K562 (cell line): ENCODE measurements at regions of chr7 and their contacts with region 1.

Region 1: DNA sequence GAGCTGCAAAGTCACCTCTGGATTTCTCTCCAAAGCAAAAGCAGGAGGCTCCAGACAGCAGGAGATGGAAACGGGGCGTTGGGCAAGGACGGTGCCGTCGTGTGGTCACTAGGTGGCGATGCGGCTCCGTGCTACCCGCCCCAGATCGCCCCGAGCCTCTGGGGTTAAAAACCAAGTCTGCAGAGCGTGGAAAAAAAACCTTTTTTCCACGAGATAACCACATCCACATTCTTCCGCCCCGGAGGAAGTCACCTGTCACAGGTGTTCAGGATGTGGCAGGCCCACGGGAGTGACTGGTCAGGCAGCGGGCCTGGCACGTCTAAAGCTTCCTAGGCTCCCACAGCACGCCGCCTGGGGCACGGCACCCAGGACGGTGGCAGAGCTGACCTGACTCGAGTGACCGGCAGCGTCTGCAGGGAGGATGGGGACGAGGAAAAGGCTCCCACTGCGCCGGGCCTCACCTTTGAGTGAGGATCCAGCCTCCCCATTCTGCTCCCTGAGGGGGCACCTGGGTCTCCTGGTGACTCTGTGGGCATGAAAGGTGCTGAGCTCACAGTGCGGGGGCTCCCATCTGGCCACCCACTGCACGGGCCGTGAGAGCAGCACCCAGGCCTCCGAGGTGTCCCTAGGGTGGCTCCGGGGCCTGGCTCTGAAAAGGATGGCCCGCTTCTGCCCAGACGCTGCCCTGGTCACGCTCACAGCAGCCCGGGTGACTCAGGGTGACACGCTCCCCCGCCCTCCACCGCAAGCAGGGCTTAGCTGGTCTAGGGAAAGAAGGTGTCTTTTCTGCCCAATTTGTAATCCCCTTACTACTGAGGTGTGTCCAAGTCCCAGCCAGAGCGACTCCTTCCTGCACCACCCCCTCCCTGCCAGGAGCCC is 71.3 kb upstream of the TNRC18 start:
- DNase-seq: peak; percentile 83 to 88 (median 86)
- ATAC-seq: peak; percentile 91
- H3K4me3 ChIP-seq: no peak overlapping the region
- H3K27ac ChIP-seq: no peak overlapping the region
- H3K4me1 ChIP-seq: peaks cover 12 to 60% of the 10 kb centered on the region in 2 experiments; a peak in 4 of 5 replicates
- H3K27me3 ChIP-seq: no peaks in the 10 kb centered on the region
- CTCF ChIP-seq: peak; percentile 95 to 97 (median 95)
- EP300 ChIP-seq: peak; percentile 10; the same call in 1 of the 2 replicates
- POLR2A ChIP-seq: no peak; the same call in 1 of the 2 replicates
- RAD21 ChIP-seq: peak; percentile 99

Region 2: GRCh38 chr7:5526100-5526905 is 31.4 kb after region 1 on chr7:
- CTCF ChIA-PET with region 1: no interaction called
- POLR2A ChIA-PET with region 1: interaction called, 42 read pairs
- in situ Hi-C with region 1: no loop called
- intact Hi-C with region 1: no loop called
- DNase-seq: peak in 1 of 4 experiments; percentile 29
- ATAC-seq: peak; percentile 41
- H3K4me3 ChIP-seq: no peak overlapping the region
- H3K27ac ChIP-seq: 0 out of 3 replicates have a peak overlapping the region, but pooled peaks have one; percentile 9
- H3K4me1 ChIP-seq: peaks cover 18 to 30% of the 10 kb centered on the region in 2 experiments
- H3K27me3 ChIP-seq: no peaks in the 10 kb centered on the region
- CTCF ChIP-seq: peak; percentile 25 to 45 (median 28); a peak in 2 of 6 replicates
- EP300 ChIP-seq: no peak; the same call in none of the 2 replicates
- POLR2A ChIP-seq: peak; percentile 97
- RAD21 ChIP-seq: peak; percentile 42 to 49

Region 3: GRCh38 chr7:5557920-5558401 is 63.0 kb after region 1 on chr7:
- CTCF ChIA-PET with region 1: interaction called, 19 read pairs
- POLR2A ChIA-PET with region 1: interaction called, 4 read pairs
- in situ Hi-C with region 1: no loop called
- intact Hi-C with region 1: loop called (anchors 1 kb)
- DNase-seq: peak in 3 of 4 experiments; percentile 9 to 48 (median 47)
- ATAC-seq: 0 out of 3 replicates have a peak, but pooled peaks have one; percentile 3
- H3K4me3 ChIP-seq: no peak overlapping the region
- H3K27ac ChIP-seq: peak overlapping the region; percentile 42; the same call in 2 of the 3 replicates
- H3K4me1 ChIP-seq: peaks cover 49 to 77% of the 10 kb centered on the region in 2 experiments
- H3K27me3 ChIP-seq: no peaks in the 10 kb centered on the region
- CTCF ChIP-seq: no peak
- EP300 ChIP-seq: no peak
- POLR2A ChIP-seq: no peak
- RAD21 ChIP-seq: no peak

Region 4: DNA sequence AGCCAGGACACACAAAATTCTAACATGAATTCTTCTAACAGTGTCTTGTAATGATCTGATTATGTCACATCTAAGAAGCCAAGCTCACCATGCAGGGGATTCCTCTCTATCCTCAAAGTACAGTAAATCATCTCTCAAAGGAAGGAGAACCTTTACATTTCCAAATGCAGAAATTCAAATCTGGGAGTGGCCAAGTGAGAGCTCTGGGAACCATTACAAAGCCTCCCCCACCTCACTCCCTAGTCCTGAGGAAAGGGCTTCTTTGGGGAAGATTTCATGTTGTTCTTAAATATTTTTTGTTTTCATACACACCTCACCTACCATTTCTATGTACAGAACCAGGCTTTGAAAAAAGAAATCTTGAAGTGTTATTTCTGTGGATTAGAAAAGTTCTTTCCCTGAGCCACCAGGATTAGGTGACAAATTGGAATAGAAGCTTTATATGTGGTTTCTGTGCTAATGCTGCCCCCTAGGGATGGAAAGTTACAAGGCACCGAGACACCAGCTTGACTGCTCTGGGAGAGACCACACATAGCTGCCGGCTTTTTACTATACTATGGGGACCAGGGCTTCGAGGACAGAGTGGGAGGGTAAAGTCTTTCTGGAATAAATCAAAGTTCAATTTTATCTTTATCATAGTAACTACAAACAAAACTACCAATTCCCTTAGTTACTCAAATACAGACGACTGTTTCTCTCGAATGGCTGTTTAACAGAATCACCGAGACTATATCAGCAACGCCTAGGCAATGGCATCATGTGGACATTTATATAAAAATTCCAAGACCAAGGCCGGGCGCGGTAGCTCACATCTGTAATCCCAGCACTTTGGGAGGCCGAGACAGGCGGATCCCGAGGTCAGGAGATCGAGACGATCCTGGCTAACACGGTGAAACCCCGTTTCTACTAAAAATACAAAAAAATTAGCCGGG is 170.4 kb after region 1 on chr7:
- CTCF ChIA-PET with region 1: interaction called, 6 read pairs
- POLR2A ChIA-PET with region 1: interaction called, 3 read pairs
- in situ Hi-C with region 1: loop called (anchors 5 kb)
- intact Hi-C with region 1: loop called (anchors 1 kb)
- DNase-seq: peak; percentile 71 to 88 (median 77)
- ATAC-seq: peak; percentile 96
- H3K4me3 ChIP-seq: no peak overlapping the region
- H3K27ac ChIP-seq: no peak overlapping the region
- H3K4me1 ChIP-seq: peaks cover 5 to 13% of the 10 kb centered on the region in 2 experiments; a peak in 4 of 5 replicates
- H3K27me3 ChIP-seq: no peaks in the 10 kb centered on the region
- CTCF ChIP-seq: peak; percentile 84 to 89 (median 85)
- EP300 ChIP-seq: 0 out of 2 replicates have a peak, but pooled peaks have one; percentile 10
- POLR2A ChIP-seq: no peak
- RAD21 ChIP-seq: peak; percentile 94 to 97

Region 5: GRCh38 chr7:5677538-5678294 is 182.8 kb after region 1 on chr7:
- CTCF ChIA-PET with region 1: interaction called, 21 read pairs
- POLR2A ChIA-PET with region 1: interaction called, 6 read pairs
- in situ Hi-C with region 1: no loop called
- intact Hi-C with region 1: no loop called
- DNase-seq: peak; percentile 57 to 67 (median 62)
- ATAC-seq: peak; percentile 86
- H3K4me3 ChIP-seq: no peak overlapping the region
- H3K27ac ChIP-seq: no peak overlapping the region
- H3K4me1 ChIP-seq: peaks cover 0 to 4% of the 10 kb centered on the region in 2 experiments; a peak in 2 of 5 replicates
- H3K27me3 ChIP-seq: no peaks in the 10 kb centered on the region
- CTCF ChIP-seq: peak; percentile 71 to 79 (median 77)
- EP300 ChIP-seq: no peak
- POLR2A ChIP-seq: no peak
- RAD21 ChIP-seq: peak; percentile 63 to 79

Region 6: DNA sequence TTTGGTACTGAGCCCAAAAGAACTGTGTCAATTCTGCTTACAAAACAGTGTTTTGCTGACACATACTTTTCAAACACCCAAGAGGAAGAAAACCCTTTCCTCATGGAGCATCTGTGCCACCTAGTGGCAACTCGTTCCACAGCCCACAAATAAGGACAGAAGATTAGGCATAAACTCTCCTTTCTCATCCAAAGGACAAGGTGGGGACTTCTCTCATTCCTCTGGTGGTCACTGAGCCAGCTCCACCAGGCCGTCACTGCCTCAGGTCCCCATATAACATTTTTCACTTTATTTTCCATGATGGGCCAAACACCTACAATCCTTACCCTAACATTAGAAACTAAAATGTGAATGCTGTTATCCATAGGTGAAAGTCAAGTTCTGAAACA is 209.6 kb after region 1 on chr7:
- CTCF ChIA-PET with region 1: interaction called, 8 read pairs
- POLR2A ChIA-PET with region 1: no interaction called
- in situ Hi-C with region 1: no loop called
- intact Hi-C with region 1: loop called (anchors 1 kb)
- DNase-seq: peak; percentile 62 to 85 (median 70)
- ATAC-seq: peak; percentile 96
- H3K4me3 ChIP-seq: no peak overlapping the region
- H3K27ac ChIP-seq: no peak overlapping the region; the same call in 2 of the 3 replicates
- H3K4me1 ChIP-seq: peaks cover 0 to 3% of the 10 kb centered on the region in 2 experiments; a peak in 3 of 5 replicates
- H3K27me3 ChIP-seq: no peaks in the 10 kb centered on the region
- CTCF ChIP-seq: peak; percentile 78 to 95 (median 91)
- EP300 ChIP-seq: no peak
- POLR2A ChIP-seq: no peak
- RAD21 ChIP-seq: peak; percentile 80 to 89

Region 7: DNA sequence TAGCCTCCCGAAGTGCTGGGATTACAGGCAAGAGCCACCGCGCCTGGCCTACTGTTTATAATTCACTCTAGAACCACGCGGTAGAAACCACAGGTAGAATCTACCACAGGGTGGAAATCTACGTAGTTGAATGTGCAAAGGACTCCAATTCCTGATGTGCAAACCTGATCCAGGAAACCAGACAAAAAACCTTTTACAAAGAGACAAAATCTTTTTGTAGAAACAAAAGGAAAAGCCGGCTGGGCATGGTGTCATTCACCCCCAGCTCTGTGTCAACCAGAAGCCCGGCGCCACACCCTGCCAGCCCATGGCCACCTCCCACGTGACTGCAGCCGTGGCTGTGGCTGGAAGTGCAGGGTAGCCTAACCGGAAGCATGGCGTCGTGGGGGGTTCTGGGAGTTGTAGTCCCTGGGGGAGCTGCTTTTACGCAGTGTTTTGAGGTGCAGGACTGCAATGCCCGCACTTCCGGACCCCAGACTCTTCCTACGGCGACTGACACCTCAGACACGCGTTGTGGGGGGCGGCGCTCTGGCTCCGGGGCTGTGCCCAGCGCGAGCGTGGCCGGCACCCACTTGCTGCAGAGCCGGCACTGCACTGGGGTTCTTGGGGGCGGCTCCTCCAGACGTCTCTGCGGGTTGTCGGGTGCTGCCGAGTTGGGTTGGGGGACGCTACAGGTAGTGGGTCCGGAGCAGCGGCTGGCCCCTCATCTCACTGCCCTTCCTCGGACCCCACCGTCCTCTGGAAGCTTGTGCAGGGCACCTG is 328.0 kb after region 1 on chr7:
- CTCF ChIA-PET with region 1: interaction called, 3 read pairs
- POLR2A ChIA-PET with region 1: no interaction called
- in situ Hi-C with region 1: no loop called
- intact Hi-C with region 1: loop called (anchors 10 kb)
- DNase-seq: peak; percentile 92 to 97 (median 92)
- ATAC-seq: peak; percentile 100
- H3K4me3 ChIP-seq: peak overlapping the region; percentile 53
- H3K27ac ChIP-seq: peak overlapping the region; percentile 83
- H3K4me1 ChIP-seq: peaks cover 4 to 19% of the 10 kb centered on the region in 2 experiments; a peak in 4 of 5 replicates
- H3K27me3 ChIP-seq: no peaks in the 10 kb centered on the region
- CTCF ChIP-seq: 0 out of 6 replicates have a peak, but pooled peaks of 1 of the 3 experiments have one; percentile 6
- EP300 ChIP-seq: no peak
- POLR2A ChIP-seq: peak; percentile 80
- RAD21 ChIP-seq: no peak